Activated CD4-positive, alpha-beta T cell treated with anti-CD3 and anti-CD28 coated beads, Interleukin-2, amount 10 ng/mL, durations not matched to agents 24 days and 14 days (primary cell): ENCODE measurements at regions of chr2 and their contacts with region 1.

Region 1: DNA sequence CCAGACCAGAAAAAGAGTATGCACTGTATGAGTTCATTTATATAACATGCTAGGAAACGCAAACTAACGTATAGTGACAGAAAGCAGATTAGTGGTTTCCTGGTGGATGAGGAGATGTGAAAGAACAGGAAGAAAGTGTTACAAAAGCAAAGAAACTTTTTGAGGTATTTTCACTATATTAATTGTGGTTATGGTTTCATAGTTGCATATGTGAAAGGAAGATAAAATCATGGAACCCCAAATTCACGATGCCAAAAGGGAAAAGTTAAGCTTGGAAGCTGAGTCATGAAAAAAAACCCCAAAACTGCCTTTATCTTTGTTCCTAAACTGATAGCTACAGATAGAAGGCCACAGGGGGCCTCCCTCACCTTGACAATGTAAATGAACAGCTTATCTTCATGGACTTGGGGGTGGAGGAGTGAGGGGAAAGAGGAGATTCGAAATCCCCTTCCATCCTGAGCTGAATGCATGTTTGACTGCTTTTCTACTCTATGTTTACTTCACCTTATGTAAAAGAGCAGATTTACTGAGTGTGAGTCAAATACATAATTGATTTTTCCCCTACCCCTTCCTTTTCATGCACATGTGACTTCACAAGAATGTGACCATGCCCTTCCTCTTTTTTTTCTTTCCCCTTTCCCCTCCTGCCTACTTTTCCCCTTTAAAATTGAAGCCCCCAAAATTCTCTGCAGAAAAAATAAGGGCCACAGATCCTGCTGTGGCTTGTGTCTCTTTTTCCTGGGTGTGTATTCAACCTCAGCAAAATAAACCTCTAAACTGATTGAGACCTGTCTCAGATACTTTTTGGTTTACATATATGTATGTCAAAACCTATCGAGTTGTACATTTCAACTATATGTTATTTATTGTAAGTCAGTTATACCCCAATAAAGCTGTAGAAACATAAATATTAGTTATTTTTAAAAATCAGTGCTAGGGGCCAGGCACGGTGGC is 100.1 kb upstream of the TLK1 start:
- DNase-seq: peak; percentile 62
- H3K4me3 Mint-ChIP-seq: peak overlapping the region; percentile 10
- H3K27ac Mint-ChIP-seq: peak overlapping the region; percentile 83
- H3K4me1 Mint-ChIP-seq: peaks cover 28% of the 10 kb centered on the region
- H3K27me3 Mint-ChIP-seq: no peaks in the 10 kb centered on the region

Region 2: GRCh38 chr2:170369894-170370293 is 890.9 kb before region 1 on chr2:
- intact Hi-C with region 1: loop called (anchors 5 kb)
- DNase-seq: no peak
- H3K4me3 Mint-ChIP-seq: no peak overlapping the region
- H3K27ac Mint-ChIP-seq: no peak overlapping the region
- H3K4me1 Mint-ChIP-seq: peaks cover 44% of the 10 kb centered on the region
- H3K27me3 Mint-ChIP-seq: peaks cover 14% of the 10 kb centered on the region

Region 3: DNA sequence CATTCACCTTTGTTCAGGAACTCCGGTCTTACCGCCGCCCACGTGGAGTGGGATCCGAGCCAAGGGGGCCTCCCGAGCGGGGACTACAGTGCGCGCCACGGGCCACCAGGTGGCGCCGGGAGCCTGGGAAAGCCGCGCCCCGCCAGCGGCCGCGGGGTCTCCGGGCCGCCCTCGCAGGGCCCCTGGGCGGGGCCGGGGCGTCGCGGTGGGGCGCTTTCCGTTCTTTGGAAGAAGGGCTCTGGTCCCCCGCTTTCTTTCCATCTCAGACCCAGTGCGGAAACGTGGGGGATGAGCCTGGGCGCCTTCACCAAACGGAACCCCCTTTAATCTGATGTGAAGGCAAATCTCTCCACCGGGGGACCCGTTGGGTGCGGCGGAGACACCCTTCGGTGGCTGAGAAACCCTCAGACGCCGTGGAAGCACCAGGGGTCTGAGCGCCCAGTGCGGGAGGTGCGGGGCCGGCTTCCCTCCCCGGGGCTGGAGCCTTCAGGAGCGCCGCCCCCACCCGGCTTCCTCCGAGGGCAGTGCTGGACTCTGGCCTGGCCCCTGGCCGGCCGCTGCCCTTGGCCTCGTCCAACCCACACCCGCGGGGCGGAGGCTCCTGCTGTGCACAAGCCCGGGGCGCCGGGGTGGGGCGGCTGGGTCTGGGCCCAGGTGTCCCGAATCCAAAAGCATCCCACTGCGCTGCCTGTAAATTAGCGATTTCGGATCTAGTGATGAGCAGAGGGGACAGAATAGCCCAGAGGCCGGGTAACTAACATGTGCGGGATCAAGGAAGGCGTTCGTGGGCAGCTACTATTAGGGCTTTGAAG is 287.1 kb before region 1 on chr2:
- intact Hi-C with region 1: loop called (anchors 5 kb)
- DNase-seq: peak; percentile 96
- H3K4me3 Mint-ChIP-seq: peak overlapping the region; percentile 82
- H3K27ac Mint-ChIP-seq: peak overlapping the region; percentile 56
- H3K4me1 Mint-ChIP-seq: peaks cover 10% of the 10 kb centered on the region
- H3K27me3 Mint-ChIP-seq: peaks cover 3% of the 10 kb centered on the region

Region 4: DNA sequence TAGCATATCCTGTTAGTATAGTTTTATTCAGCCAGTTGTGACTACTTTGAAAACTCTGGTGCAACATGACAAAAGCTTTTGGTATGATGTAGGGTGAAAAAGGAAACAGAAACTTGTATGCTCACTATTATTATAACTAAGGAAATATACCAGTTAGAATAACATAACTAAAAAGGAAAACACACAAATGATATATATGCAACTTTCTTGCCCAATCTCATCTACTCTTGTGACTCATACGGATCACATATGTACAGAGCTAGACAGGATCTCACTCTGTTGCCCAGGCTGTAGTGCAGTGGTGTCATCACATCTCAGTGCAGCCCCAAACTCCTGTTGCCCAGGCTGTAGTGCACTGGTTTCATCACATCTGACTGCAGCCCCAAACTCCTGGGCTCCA is 87.7 kb before region 1 on chr2:
- intact Hi-C with region 1: loop called (anchors 1 kb)
- DNase-seq: no peak
- H3K4me3 Mint-ChIP-seq: no peak overlapping the region
- H3K27ac Mint-ChIP-seq: no peak overlapping the region
- H3K4me1 Mint-ChIP-seq: peaks cover 4% of the 10 kb centered on the region
- H3K27me3 Mint-ChIP-seq: peaks cover 5% of the 10 kb centered on the region

Region 5: DNA sequence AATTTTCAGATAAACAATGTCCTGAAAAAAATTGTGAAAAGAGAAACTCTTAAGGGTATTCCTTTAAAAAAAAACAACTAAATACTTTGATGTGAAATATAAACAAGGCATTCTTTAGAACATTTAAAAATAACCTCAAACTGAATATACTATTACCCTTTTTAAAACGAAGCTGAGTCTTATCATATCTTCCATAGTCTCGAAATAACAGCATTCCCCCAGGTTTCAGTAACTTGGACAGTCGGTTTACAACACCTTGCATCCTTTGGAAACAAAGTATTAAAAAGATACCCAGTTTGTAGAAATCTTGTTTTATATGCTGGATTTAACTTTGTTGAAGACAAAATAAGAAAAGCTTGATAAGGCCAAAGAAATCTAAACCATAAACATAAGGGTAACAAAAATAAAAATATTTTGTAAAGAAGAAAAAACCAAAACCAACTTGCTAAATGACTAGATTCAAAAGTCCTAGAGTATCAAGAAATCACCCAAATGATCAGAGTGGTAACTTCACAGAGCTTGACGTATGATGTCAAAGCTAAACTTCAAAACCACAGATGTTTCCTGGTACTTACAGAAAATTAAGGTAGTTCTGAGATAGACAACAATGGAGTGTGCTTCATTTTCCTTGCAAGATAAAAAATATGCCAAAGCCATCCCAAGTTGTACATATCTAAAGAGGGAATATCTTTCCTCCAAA is 65.3 kb after region 1 on chr2:
- intact Hi-C with region 1: loop called (anchors 2 kb)
- DNase-seq: no peak
- H3K4me3 Mint-ChIP-seq: peak overlapping the region; percentile 61
- H3K27ac Mint-ChIP-seq: peak overlapping the region; percentile 79
- H3K4me1 Mint-ChIP-seq: peaks cover 37% of the 10 kb centered on the region
- H3K27me3 Mint-ChIP-seq: no peaks in the 10 kb centered on the region

Region 6: DNA sequence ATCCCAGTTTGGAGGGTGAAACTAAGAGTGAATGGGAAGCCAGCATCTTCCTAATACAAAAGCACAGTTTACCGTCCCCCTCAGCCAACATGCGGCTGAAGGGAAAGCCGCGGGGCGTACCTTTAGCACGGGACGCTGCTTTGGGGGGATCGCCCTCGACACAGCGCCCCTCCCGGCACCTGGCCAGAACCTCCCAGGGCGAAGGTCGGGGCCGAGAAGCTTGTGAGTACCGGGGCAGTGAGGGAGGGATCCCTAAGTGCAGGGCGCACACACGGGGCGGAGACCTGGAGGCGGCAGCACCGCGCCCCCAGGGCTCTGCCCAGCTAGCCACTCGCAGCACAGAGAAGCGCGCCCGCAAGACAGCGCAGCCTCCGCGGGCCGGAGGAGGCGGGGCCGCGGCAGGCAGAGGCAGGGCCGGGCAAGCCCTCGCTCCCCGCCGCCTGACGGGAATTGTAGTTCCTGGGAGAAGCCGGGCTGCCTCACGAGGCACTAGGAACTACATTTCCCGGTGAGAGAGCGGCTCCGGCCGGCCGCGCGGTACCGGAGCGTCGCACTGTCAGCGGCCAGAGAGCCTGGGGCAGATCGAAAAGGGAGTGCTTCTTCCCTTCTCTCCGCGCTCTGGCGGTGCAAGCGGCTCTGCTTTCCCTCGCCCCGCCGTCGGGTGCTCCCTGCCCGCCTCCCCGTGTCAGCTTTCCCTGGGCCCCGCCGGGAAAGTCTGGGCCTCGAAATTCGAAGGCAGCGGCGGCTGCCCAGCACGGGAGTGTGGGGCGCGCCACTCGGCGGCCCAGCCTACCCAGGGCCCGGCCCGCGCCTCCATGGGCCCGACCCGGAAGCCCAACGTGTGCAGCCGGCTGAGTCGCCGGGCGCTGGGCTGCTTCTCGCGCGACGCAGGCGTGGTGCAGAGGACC is 173.3 kb after region 1 on chr2 and contains the starts of genes DCAF17 and METTL8:
- intact Hi-C with region 1: loop called (anchors 1 kb)
- DNase-seq: peak; percentile 98
- H3K4me3 Mint-ChIP-seq: peak within 1 kb of the TSS; percentile 82
- H3K27ac Mint-ChIP-seq: peak within 1 kb of the TSS; percentile 88
- H3K4me1 Mint-ChIP-seq: peaks cover 23% of the 10 kb centered on the region
- H3K27me3 Mint-ChIP-seq: no peaks in the 10 kb centered on the region
- total RNA-seq, gene DCAF17: 27.3 and 27.4 TPM in 2 replicates
- total RNA-seq, gene METTL8: 33.1 and 42.9 TPM in 2 replicates

Region 7: DNA sequence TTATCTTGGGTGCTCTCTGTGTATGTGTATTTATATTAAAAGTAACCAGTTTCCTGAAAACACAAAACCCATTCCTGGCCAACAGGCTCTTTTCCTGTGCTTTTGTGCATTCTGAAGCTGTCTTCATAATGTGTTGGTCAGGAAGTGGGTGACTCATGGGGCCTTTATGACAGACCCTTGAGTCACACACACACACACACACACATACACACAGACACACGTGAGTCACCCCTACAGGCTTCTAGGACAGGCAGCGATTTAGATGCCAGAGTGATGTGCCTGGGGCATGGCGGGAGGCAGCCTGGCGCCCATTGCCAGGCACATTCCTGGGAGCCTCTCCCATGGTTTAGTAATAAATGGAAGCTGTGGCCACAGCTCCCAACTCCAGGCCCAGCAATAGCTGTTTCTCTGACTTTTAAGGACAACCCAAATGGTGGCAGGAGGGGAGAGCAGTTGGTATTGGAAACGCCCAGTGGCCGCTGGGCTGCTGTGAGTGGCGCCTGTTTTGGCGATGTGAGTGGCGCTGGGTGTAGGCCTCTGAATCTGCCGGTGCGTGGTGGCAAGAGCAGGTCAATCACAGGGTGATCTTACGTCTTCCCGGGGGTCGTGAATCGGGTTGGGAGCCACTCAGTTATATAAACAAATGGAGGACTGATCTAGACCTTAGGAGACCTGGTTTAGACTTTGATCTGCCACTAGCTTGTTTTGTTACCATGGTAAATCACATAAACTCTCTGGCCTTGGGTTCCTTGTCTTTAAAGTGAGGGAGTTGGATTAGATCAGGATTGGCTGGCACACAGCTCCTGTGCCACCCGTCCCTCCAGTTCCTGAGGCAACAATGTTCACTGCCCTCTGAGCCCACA is 992.7 kb after region 1 on chr2:
- intact Hi-C with region 1: no loop called
- DNase-seq: peak; percentile 81
- H3K4me3 Mint-ChIP-seq: no peak overlapping the region
- H3K27ac Mint-ChIP-seq: peak overlapping the region; percentile 34
- H3K4me1 Mint-ChIP-seq: peaks cover 26% of the 10 kb centered on the region
- H3K27me3 Mint-ChIP-seq: peaks cover 9% of the 10 kb centered on the region